Mammary epithelial cell (primary cell): ENCODE measurements at regions of chr19 and their contacts with region 1.

Region 1: GRCh38 chr19:21141787-21142464 is at the start of gene ZNF431:
- DNase-seq: peak; percentile 95
- H3K4me3 ChIP-seq: peak within 1 kb of the TSS; percentile 71 to 89 (median 82)
- H3K27ac ChIP-seq: peak within 1 kb of the TSS; percentile 73
- H3K4me1 ChIP-seq: peaks cover 12% of the 10 kb centered on the region
- H3K27me3 ChIP-seq: no peaks in the 10 kb centered on the region
- CTCF ChIP-seq: no peak
- total RNA-seq, gene ZNF431: 12.8 to 14.2 TPM

Region 2: GRCh38 chr19:20423381-20424197 is 718.3 kb before region 1 on chr19:
- CTCF ChIA-PET with region 1: no interaction called
- dilution Hi-C with region 1: no loop called
- in situ Hi-C with region 1: no loop called
- intact Hi-C with region 1: loop called (anchors 10 kb)
- DNase-seq: peak; percentile 56
- H3K4me3 ChIP-seq: peak overlapping the region; percentile 43 to 58 (median 52)
- H3K27ac ChIP-seq: peak overlapping the region; percentile 22
- H3K4me1 ChIP-seq: no peaks in the 10 kb centered on the region
- H3K27me3 ChIP-seq: no peaks in the 10 kb centered on the region
- CTCF ChIP-seq: no peak

Region 3: DNA sequence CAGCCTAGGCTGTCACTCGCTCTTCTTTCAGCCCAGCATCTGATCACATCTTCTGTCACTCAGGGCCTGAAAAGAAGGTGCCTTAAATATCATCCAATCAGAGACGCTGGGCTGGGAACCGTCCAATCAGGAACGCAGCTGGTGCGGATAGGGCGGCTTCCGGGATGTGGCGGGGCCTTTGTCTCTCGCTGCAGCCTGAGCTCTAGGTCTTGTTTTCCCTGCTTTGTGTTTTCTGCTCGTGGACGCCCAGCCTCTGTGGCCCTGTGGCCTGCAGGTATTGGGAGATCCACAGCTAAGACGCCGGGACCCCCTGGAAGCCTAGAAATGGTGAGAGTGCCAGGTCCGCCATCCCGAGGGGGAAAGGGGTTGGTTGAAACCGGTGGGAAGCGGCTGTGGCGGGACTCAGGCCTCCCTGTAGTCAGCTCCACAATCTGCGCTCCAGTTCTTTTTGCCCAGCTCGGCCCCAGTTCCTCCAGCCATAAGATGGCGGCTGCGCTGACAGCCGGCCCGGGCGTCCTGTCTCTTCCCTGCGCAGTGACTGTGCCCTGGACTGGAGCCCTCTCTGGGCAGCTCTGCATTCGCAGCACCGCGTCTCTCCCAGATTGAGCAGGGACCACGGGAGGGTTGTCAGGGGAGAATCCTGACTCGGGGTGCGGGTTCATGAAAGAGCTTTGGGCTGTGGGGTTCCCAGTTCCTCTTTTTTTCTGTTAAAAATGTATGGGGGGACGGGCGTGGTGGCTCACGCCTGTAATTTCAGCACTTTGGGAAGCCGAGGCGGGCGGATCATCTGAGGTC is 218.7 kb before region 1 on chr19 and contains the start of gene ZNF85:
- CTCF ChIA-PET with region 1: no interaction called
- dilution Hi-C with region 1: no loop called
- in situ Hi-C with region 1: no loop called
- intact Hi-C with region 1: loop called (anchors 5 kb)
- DNase-seq: peak; percentile 90
- H3K4me3 ChIP-seq: peak within 1 kb of the TSS; percentile 71 to 93 (median 76)
- H3K27ac ChIP-seq: peak within 1 kb of the TSS; percentile 72
- H3K4me1 ChIP-seq: no peaks in the 10 kb centered on the region
- H3K27me3 ChIP-seq: no peaks in the 10 kb centered on the region
- CTCF ChIP-seq: no peak
- total RNA-seq, gene ZNF85: 9.8 to 10.5 TPM

Region 4: GRCh38 chr19:21020298-21021227 is 121.4 kb before region 1 on chr19 and contains the start of gene ZNF430:
- CTCF ChIA-PET with region 1: no interaction called
- dilution Hi-C with region 1: no loop called
- in situ Hi-C with region 1: no loop called
- intact Hi-C with region 1: loop called (anchors 2 kb)
- DNase-seq: peak; percentile 94
- H3K4me3 ChIP-seq: peak within 1 kb of the TSS; percentile 70 to 89 (median 75)
- H3K27ac ChIP-seq: peak within 1 kb of the TSS; percentile 98
- H3K4me1 ChIP-seq: peaks cover 22% of the 10 kb centered on the region
- H3K27me3 ChIP-seq: no peaks in the 10 kb centered on the region
- CTCF ChIP-seq: no peak
- total RNA-seq, gene ZNF430: 14.1 to 19.3 TPM

Region 5: GRCh38 chr19:21092109-21092508 is 49.8 kb before region 1 on chr19:
- CTCF ChIA-PET with region 1: no interaction called
- dilution Hi-C with region 1: no loop called
- in situ Hi-C with region 1: no loop called
- intact Hi-C with region 1: loop called (anchors 5 kb)
- DNase-seq: no peak
- H3K4me3 ChIP-seq: no peak overlapping the region
- H3K27ac ChIP-seq: no peak overlapping the region
- H3K4me1 ChIP-seq: no peaks in the 10 kb centered on the region
- H3K27me3 ChIP-seq: no peaks in the 10 kb centered on the region
- CTCF ChIP-seq: no peak

Region 6: DNA sequence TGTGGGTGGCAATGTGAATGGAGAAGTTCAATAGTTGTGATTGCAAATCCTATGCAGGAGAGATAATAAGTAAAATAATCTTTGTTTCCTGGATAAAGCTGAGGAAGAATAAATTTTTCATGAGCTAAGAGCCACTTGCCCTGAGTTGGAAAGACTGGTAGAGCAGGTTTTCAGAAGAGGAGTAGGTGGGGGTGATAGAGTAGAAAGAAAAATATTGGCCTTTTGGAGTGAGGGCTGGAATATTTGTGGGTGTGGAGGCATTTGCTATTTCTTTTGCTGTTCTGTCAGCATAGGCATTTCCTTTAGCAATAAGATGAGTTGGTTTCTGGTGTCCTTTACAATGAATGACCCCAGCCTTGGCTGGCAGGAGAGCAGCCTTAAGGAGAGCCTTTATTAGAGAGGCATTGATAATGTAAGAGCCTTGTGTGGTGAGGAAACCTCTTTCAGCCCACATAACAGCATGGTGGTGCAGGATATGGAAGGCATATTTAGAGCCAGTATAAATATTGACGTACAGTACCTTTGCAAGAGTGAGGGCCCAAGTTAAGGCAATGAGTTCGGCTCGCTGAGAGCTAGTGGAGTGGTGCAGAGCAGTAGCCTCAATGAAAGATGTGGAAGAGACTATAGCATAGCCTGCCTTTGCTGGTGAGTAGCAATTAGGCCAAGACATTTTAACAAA is 11.7 kb before region 1 on chr19:
- CTCF ChIA-PET with region 1: no interaction called
- dilution Hi-C with region 1: no loop called
- in situ Hi-C with region 1: no loop called
- intact Hi-C with region 1: no loop called
- DNase-seq: peak; percentile 59
- H3K4me3 ChIP-seq: no peak overlapping the region
- H3K27ac ChIP-seq: no peak overlapping the region
- H3K4me1 ChIP-seq: no peaks in the 10 kb centered on the region
- H3K27me3 ChIP-seq: no peaks in the 10 kb centered on the region
- CTCF ChIP-seq: no peak

Region 7: GRCh38 chr19:21158523-21159135 is 16.7 kb after region 1 on chr19:
- CTCF ChIA-PET with region 1: no interaction called
- dilution Hi-C with region 1: no loop called
- in situ Hi-C with region 1: no loop called
- intact Hi-C with region 1: loop called (anchors 1 kb)
- DNase-seq: peak; percentile 57
- H3K4me3 ChIP-seq: no peak overlapping the region
- H3K27ac ChIP-seq: peak overlapping the region; percentile 4
- H3K4me1 ChIP-seq: peaks cover 8% of the 10 kb centered on the region
- H3K27me3 ChIP-seq: no peaks in the 10 kb centered on the region
- CTCF ChIP-seq: no peak

Region 8: DNA sequence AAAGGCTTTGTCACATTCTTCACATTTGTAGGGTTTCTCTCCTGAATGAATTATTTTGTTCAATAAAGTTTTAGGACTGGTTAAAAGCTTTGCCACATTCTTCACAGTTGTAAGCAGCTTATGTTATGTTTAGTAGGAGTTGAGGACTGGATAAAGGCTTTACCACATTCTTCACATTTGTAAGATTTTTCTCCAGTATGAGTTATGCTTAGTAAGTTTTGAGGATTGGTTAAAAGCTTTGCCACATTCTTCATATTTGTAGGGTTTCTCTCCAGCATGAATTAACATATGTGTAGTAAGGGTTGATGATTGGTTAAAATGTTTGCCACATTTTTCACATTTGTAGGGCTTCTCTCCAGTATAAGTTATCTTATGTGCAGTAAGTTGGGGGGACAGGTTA is 79.8 kb after region 1 on chr19:
- CTCF ChIA-PET with region 1: no interaction called
- dilution Hi-C with region 1: no loop called
- in situ Hi-C with region 1: no loop called
- intact Hi-C with region 1: no loop called
- DNase-seq: no peak
- H3K4me3 ChIP-seq: no peak overlapping the region
- H3K27ac ChIP-seq: no peak overlapping the region
- H3K4me1 ChIP-seq: no peaks in the 10 kb centered on the region
- H3K27me3 ChIP-seq: no peaks in the 10 kb centered on the region
- CTCF ChIP-seq: no peak